ENCODE measurements at regions of chr17 and their contacts with region 1.

Region 1: DNA sequence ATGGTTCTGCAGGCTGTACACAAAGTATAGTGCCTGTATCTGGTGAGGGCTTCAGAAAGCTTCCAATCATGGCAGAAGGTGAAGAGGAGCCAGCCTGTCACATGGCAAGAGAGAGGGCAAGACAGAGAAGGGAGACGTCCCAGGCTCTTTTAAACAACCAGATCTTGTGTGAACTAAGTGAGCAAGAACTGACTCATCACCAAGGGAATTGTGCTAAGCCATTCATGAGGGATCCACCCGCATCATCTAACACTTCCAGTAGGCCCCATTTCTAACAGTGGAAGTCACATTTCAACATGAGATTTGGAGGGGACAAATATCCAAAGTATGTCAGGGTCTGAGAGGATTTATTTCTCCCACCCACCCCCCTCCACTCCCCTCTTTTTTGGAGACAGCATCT is 56.2 kb upstream of the ELAC2 start:
- DNase-seq: no peak
- ATAC-seq: peak in 3 of 8 donors; percentile 46 to 92 (median 47)
- H3K4me3 ChIP-seq: no peak overlapping the region
- H3K27ac ChIP-seq: no peak overlapping the region
- H3K4me1 ChIP-seq: peaks cover 0 to 9% (median 0%) of the 10 kb centered on the region in 9 donors
- H3K27me3 ChIP-seq: peaks cover 0 to 3% (median 0%) of the 10 kb centered on the region in 7 donors
- CTCF ChIP-seq: no peak

Region 2: GRCh38 chr17:12431188-12431587 is 642.8 kb before region 1 on chr17:
- intact Hi-C with region 1: no loop called
- DNase-seq: no peak
- ATAC-seq: no peak
- H3K4me3 ChIP-seq: no peak overlapping the region
- H3K27ac ChIP-seq: no peak overlapping the region
- H3K4me1 ChIP-seq: no peaks in the 10 kb centered on the region
- H3K27me3 ChIP-seq: no peaks in the 10 kb centered on the region
- CTCF ChIP-seq: no peak

Region 3: GRCh38 chr17:12859520-12859919 is 214.5 kb before region 1 on chr17:
- intact Hi-C with region 1: loop called in 1 of 10 experiments (anchors 10 kb)
- DNase-seq: no peak
- ATAC-seq: no peak
- H3K4me3 ChIP-seq: no peak overlapping the region
- H3K27ac ChIP-seq: no peak overlapping the region
- H3K4me1 ChIP-seq: peaks cover 0 to 3% (median 0%) of the 10 kb centered on the region in 9 donors
- H3K27me3 ChIP-seq: no peaks in the 10 kb centered on the region
- CTCF ChIP-seq: no peak

Region 4: DNA sequence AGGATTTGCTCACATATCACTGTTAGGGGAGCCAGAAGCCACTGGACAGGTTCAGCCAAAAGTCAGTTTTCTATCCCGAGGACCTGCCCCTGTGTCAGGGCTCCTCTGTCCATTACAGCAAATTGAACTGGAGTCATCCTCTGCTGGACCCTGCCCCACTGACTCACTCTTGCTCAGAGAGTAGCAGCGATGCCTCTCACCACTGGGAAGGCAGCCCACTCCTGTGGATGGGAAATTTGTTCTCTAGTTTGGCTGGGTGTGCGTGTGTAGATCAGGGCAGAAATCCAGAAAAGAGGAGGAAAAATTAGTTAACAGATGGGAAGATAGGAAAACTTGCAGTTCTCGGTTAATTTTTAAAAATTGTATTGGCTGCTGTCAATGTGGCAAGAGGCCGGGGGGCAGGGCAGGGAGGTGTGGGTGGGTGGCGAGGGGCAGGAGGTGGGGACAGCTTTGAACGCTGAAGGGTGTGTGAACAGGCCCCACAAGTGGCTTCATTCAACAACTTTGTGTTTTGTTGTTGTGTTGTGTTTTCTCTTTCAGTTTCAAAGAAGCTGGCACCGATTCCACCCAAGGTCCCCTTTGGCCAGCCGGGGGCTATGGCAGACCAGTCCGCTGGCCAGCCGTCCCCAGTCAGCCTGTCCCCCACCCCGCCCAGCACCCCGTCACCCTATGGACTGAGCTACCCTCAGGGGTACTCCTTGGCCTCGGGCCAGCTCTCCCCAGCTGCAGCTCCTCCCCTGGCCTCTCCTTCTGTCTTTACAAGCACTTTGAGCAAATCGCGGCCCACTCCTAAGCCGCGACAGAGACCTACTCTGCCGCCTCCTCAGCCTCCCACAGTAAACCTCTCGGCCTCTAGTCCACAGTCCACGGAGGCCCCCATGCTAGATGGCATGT is 89.8 kb before region 1 on chr17:
- intact Hi-C with region 1: no loop called
- DNase-seq: peak; percentile 54 to 61
- ATAC-seq: peak; percentile 24 to 81 (median 51)
- H3K4me3 ChIP-seq: peak overlapping the region in 5 of 10 donors; percentile 17 to 32 (median 25)
- H3K27ac ChIP-seq: peak overlapping the region; percentile 31 to 79 (median 67)
- H3K4me1 ChIP-seq: peaks cover 6 to 44% (median 25%) of the 10 kb centered on the region in 9 donors
- H3K27me3 ChIP-seq: no peaks in the 10 kb centered on the region
- CTCF ChIP-seq: no peak

Region 5: DNA sequence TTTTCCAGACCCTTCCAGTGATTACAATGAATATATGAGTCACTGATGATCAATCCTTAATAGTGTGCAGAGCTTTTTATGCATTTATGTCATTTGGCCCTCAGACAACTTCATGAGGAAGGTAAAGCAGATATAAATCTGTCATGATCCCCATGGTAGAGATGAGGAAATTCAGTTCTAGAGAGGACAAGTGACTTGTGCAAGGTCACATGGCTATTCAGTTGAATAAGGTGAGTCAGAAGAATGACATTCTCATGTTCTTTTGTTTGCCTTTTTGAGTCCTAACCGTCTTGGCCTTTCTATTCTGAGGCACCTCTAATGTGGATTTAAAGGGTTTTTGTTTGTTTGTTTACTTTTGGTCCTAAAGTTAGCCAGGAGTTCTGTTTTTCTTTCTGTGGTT is 60.0 kb after region 1 on chr17:
- intact Hi-C with region 1: no loop called
- DNase-seq: no peak
- ATAC-seq: no peak
- H3K4me3 ChIP-seq: no peak overlapping the region
- H3K27ac ChIP-seq: no peak overlapping the region
- H3K4me1 ChIP-seq: no peaks in the 10 kb centered on the region
- H3K27me3 ChIP-seq: no peaks in the 10 kb centered on the region
- CTCF ChIP-seq: no peak

Measured in heart right ventricle (tissue), 16 donors.